Dorsolateral prefrontal cortex (tissue), 120 donors: ENCODE measurements at regions of chr6 and their contacts with region 1.

Region 1: GRCh38 chr6:43974643-43975230 is 152.5 kb downstream of the MRPL14 start:
- DNase-seq: no peak
- H3K4me3 ChIP-seq: no peak overlapping the region
- H3K27ac ChIP-seq: no peak overlapping the region
- H3K27me3 ChIP-seq: no peaks in the 10 kb centered on the region
- CTCF ChIP-seq: no peak

Region 2: DNA sequence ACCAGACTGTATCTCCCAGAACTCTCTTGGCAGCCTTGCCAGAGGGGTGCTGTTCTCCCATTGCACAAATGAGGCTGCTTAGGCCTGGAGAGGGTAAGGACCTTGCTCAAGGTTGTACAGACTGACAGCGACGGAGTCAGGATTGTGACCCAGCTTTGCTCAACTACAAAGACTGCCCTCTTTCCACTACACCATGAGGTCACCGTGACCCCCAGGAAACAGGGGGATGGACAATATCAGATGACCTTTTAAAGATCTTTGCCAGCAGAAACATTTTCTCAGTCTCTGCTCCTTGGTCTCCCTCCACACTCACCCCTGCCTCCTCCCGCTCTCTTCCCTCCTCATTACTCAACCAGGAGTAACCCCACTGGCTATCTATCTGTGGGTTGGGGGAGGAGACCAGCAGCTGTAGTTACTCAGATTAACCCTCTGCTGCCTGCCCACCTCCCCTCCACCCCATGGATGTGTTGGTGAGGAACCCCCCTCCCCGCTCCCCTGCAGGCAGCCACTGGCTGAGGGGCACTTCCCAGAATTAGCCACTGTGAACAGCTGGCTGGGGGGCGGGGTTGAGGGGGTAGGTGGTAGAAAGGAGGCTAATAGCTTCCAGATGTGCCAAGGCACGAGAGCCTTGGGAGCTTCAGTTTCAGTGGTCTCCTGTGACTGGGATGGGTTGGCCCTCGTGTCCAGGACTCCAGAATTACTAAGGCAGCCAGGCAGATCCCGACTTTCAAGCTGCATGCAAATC is 260.3 kb before region 1 on chr6:
- intact Hi-C with region 1: no loop called
- DNase-seq: no peak
- H3K4me3 ChIP-seq: no peak overlapping the region
- H3K27ac ChIP-seq: no peak overlapping the region
- H3K27me3 ChIP-seq: peaks cover 0 to 3% (median 0%) of the 10 kb centered on the region in 45 donors
- CTCF ChIP-seq: no peak

Region 3: DNA sequence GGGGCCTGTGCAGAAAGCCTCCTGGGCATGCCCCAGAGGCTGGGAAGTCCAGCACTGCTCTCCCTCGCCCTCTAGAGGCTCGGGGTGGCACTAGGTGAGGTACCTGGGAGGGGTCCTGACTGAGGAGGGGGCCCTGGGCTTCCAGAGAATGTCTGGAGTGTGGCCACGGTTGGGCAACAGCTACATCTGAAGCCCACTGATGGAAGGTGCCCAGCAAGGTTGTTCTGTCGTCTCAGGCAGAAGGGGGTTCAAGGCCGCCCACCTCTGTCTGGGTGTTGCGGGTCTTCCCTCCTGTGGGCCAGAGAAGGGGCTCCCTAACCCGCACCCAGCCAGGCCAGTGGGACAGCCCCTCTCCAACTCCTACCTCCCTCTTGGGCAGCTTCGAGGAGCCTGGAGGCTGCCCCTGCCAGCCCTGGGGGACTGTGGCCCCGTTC is 216.1 kb before region 1 on chr6:
- intact Hi-C with region 1: no loop called
- DNase-seq: peak in 1 of 10 donors; percentile 39
- H3K4me3 ChIP-seq: no peak overlapping the region
- H3K27ac ChIP-seq: no peak overlapping the region
- H3K27me3 ChIP-seq: no peaks in the 10 kb centered on the region
- CTCF ChIP-seq: peak in 52 of 56 donors; percentile 22 to 67 (median 44)

Region 4: GRCh38 chr6:44022296-44022661 is 47.5 kb after region 1 on chr6:
- intact Hi-C with region 1: loop called in 1 of 2 experiments (anchors 2 kb)
- DNase-seq: peak in 1 of 10 donors; percentile 17
- H3K4me3 ChIP-seq: no peak overlapping the region
- H3K27ac ChIP-seq: no peak overlapping the region
- H3K27me3 ChIP-seq: peaks cover 0 to 5% (median 0%) of the 10 kb centered on the region in 45 donors
- CTCF ChIP-seq: no peak